ENCODE measurements at regions of chrX and their contacts with region 1.

Region 1: GRCh38 chrX:36501181-36501580 is 507.0 kb upstream of the FAM47C start:
- DNase-seq: no peak
- H3K4me3 ChIP-seq: no peak overlapping the region
- H3K27ac ChIP-seq: no peak overlapping the region
- H3K4me1 ChIP-seq: no peaks in the 10 kb centered on the region
- H3K27me3 ChIP-seq: no peaks in the 10 kb centered on the region
- CTCF ChIP-seq: no peak
- POLR2A ChIP-seq: no peak

Region 2: DNA sequence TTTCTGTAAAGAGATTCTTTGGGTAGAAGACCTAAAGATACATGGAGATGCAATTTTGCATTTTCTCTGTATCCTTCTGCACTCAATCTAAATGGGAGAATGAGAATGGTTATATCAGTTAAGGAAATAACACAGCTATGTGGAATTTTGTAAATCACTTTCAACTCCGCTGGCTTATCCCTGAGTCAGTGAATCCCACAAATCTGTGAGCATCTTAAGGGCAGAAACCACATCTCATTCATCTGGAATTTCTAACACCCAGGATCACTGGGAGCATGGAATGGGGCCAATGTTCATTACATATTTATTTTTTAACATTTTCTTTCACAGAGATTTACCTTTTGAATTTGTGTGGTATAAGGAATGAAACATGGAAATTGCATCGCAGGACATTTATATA is 413.8 kb before region 1 on chrX:
- CTCF ChIA-PET with region 1: no interaction called
- POLR2A ChIA-PET with region 1: no interaction called
- dilution Hi-C with region 1: no loop called
- intact Hi-C with region 1: loop called (anchors 10 kb)
- DNase-seq: no peak
- H3K4me3 ChIP-seq: no peak overlapping the region
- H3K27ac ChIP-seq: no peak overlapping the region
- H3K4me1 ChIP-seq: no peaks in the 10 kb centered on the region
- H3K27me3 ChIP-seq: no peaks in the 10 kb centered on the region
- CTCF ChIP-seq: no peak
- POLR2A ChIP-seq: no peak

Region 3: GRCh38 chrX:36867143-36867542 is 366.0 kb after region 1 on chrX:
- CTCF ChIA-PET with region 1: no interaction called
- POLR2A ChIA-PET with region 1: no interaction called
- dilution Hi-C with region 1: no loop called
- intact Hi-C with region 1: no loop called
- DNase-seq: peak; percentile 29
- H3K4me3 ChIP-seq: no peak overlapping the region
- H3K27ac ChIP-seq: no peak overlapping the region
- H3K4me1 ChIP-seq: no peaks in the 10 kb centered on the region
- H3K27me3 ChIP-seq: no peaks in the 10 kb centered on the region
- CTCF ChIP-seq: peak in 1 of 2 donors; percentile 23
- POLR2A ChIP-seq: no peak

Measured in endothelial cell of umbilical vein (primary cell).